ENCODE measurements at regions of chr5 and their contacts with region 1.

Region 1: GRCh38 chr5:174951146-174951780 is 226.9 kb downstream of the MSX2 start:
- DNase-seq: peak; percentile 49 to 60
- H3K4me3 ChIP-seq: no peak overlapping the region
- H3K27ac ChIP-seq: no peak overlapping the region
- H3K4me1 ChIP-seq: no peaks in the 10 kb centered on the region
- H3K27me3 ChIP-seq: no peaks in the 10 kb centered on the region; a peak in 1 of 7 replicates
- CTCF ChIP-seq: peak; percentile 75 to 95 (median 88)
- EP300 ChIP-seq: no peak
- POLR2A ChIP-seq: no peak
- RAD21 ChIP-seq: peak; percentile 100

Region 2: GRCh38 chr5:175444060-175444904 is 493.0 kb after region 1 on chr5 and contains the start of gene DRD1:
- CTCF ChIA-PET with region 1: interaction called, 22 read pairs
- POLR2A ChIA-PET with region 1: no interaction called
- DNase-seq: peak in 1 of 2 experiments; percentile 95
- H3K4me3 ChIP-seq: peak within 1 kb of the TSS; percentile 26 to 67 (median 52)
- H3K27ac ChIP-seq: no peak within 1 kb of the TSS
- H3K4me1 ChIP-seq: peaks cover 3 to 12% (median 8%) of the 10 kb centered on the region in 4 experiments; a peak in 6 of 7 replicates
- H3K27me3 ChIP-seq: peaks cover 11 to 42% (median 38%) of the 10 kb centered on the region in 4 experiments
- CTCF ChIP-seq: peak; percentile 75 to 95 (median 77)
- EP300 ChIP-seq: no peak
- POLR2A ChIP-seq: no peak
- RAD21 ChIP-seq: peak; percentile 85 to 95
- total RNA-seq, gene DRD1: 0.08 and 0.19 TPM in 2 replicates

Measured in H1 (cell line).